Calu3 (cell line): ENCODE measurements at regions of chr5 and their contacts with region 1.

Region 1: DNA sequence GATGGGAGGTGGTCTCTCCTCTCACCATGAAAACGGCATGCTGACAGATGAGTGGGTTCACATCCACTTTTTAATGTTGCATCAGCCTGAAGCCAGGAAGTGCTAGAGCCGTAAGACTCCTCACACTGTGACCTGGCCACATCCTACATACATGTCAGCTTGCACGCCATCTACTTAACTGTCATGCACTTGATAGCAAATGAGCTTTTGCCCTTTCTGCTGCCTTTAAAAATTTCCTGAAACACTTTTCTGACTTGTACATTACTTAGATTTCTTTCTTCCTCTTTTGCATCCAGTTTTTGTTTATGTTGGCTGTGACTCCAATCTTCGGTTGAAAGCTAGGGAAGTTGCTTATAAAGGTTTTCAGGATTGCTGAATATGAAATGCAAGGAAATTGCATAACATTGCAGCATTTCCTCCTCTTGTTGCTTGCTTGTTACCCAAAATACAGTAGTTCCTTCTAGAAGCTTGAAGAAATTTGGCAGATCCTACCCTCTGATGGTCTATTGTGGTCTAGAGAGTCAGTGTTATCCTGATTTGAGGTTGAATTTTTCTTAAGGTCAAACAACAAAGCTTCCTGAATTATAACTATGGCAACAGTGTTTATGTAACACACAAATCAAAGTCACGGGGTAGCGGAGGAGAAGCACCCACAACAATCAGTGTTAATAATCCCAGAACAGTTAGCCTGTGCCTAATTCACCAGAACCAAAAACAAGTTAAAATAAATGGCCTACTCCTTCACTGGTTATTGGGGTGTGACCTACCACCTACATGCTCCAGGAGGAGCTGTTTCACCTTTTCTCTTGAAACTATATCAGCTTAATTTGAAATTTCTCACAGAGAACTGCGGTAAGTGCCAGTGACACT is 232.5 kb downstream of the ARHGAP26 start:
- DNase-seq: peak; percentile 7
- H3K4me3 Mint-ChIP-seq: no peak overlapping the region
- H3K27ac Mint-ChIP-seq: peak overlapping the region; percentile 56
- H3K4me1 Mint-ChIP-seq: peaks cover 26% of the 10 kb centered on the region
- H3K27me3 Mint-ChIP-seq: no peaks in the 10 kb centered on the region
- CTCF ChIP-seq: no peak

Region 2: GRCh38 chr5:142845402-142845921 is 157.2 kb before region 1 on chr5:
- CTCF ChIA-PET with region 1: no interaction called
- intact Hi-C with region 1: no loop called
- DNase-seq: no peak
- H3K4me3 Mint-ChIP-seq: peak overlapping the region; percentile 44
- H3K27ac Mint-ChIP-seq: peak overlapping the region; percentile 79
- H3K4me1 Mint-ChIP-seq: peaks cover 78% of the 10 kb centered on the region
- H3K27me3 Mint-ChIP-seq: no peaks in the 10 kb centered on the region
- CTCF ChIP-seq: no peak

Region 3: DNA sequence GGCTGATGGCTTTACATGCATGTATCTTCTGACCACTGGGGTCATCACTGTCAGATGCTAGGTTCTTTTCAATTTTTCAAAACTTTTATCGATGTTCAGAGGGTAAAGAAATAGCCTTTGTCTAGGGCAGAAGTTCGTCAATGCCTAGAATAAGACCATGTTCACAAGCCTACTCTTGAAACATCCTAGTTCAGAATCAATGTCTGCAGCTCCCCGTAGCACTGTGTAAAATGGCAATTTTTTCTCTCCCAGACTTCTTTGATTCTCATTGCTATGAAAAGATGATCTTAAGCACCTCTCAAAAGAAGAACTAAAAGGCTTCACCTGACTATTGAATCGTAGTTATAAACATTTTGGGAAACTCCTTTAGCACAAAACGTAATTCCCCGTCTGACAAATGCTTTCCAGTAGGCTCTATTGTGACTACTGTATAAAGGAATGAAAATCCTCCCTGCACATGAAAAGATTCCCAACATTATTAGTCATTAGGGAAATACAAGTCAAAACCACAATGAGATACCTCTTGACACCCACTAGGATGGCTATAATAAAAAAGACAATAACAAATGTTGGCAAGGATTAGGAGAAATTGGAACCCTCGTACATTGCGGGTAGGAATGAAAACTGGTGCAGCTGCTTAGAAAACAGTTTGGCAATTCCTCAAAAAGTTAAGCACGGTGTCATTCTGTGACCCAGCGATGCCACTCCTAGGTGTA is 31.0 kb after region 1 on chr5:
- CTCF ChIA-PET with region 1: no interaction called
- intact Hi-C with region 1: no loop called
- DNase-seq: no peak
- H3K4me3 Mint-ChIP-seq: no peak overlapping the region
- H3K27ac Mint-ChIP-seq: no peak overlapping the region
- H3K4me1 Mint-ChIP-seq: peaks cover 23% of the 10 kb centered on the region
- H3K27me3 Mint-ChIP-seq: no peaks in the 10 kb centered on the region
- CTCF ChIP-seq: no peak

Region 4: DNA sequence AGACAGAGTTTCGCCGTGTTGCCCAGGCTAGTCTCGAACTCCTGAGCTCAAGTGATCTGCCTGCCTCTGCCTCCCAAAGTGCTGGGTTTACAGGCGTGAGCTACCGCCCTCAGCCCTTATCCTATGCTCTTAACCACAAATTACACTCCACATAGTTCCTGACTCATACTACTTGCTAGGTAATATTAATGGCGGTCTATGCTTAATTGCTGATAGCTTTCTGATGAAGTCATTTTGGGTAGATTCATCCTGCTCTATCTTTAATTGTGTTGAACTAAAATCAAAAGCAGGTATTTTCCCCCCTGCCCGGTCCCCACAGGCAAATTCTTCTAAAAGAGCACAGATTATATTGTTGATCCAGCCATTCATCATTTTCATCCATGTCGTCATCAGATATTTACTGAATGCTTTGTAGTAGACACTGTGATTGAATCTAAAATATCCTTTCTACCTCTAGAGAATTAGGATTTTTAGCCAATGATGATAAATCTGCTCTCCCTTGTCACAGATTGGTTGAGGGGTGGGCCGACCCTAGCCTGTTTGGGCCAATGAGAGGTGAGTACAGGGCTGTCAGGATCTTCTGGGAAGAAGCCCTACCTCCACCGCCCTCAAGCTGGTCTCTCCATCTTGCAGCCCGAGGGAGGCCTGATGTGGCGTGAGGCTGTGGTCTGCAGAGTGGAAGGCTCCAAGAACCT is 256.0 kb after region 1 on chr5:
- CTCF ChIA-PET with region 1: no interaction called
- intact Hi-C with region 1: no loop called
- DNase-seq: no peak
- H3K4me3 Mint-ChIP-seq: no peak overlapping the region
- H3K27ac Mint-ChIP-seq: no peak overlapping the region
- H3K4me1 Mint-ChIP-seq: peaks cover 17% of the 10 kb centered on the region
- H3K27me3 Mint-ChIP-seq: no peaks in the 10 kb centered on the region
- CTCF ChIP-seq: no peak

Region 5: DNA sequence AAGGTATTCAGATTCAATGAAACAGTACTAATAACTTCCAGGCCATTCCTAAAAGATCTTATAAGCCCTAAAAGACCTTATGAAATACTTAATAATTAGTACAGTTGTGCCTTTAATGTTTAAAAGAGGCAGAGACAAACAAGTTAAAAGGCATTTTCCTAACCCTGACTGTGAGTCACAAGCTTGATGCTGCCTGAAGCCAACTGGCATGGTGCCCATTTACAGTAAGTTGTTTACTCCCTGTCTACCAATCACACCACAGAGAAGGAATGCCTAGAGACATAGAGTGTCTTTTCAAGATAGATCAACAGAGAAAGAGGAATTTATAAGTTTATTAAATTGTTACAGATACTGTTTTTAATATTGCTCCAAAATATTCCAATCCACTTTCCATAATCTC is 353.0 kb after region 1 on chr5:
- CTCF ChIA-PET with region 1: no interaction called
- intact Hi-C with region 1: no loop called
- DNase-seq: peak; percentile 83
- H3K4me3 Mint-ChIP-seq: no peak overlapping the region
- H3K27ac Mint-ChIP-seq: peak overlapping the region; percentile 61
- H3K4me1 Mint-ChIP-seq: peaks cover 48% of the 10 kb centered on the region
- H3K27me3 Mint-ChIP-seq: no peaks in the 10 kb centered on the region
- CTCF ChIP-seq: no peak

Region 6: GRCh38 chr5:144187699-144188294 is 1185.1 kb after region 1 on chr5:
- CTCF ChIA-PET with region 1: interaction called, 11 read pairs
- intact Hi-C with region 1: no loop called
- DNase-seq: peak; percentile 63
- H3K4me3 Mint-ChIP-seq: no peak overlapping the region
- H3K27ac Mint-ChIP-seq: peak overlapping the region; percentile 29
- H3K4me1 Mint-ChIP-seq: peaks cover under 1% of the 10 kb centered on the region
- H3K27me3 Mint-ChIP-seq: no peaks in the 10 kb centered on the region
- CTCF ChIP-seq: no peak